ENCODE measurements at regions of chr1 and their contacts with region 1.

Region 1: DNA sequence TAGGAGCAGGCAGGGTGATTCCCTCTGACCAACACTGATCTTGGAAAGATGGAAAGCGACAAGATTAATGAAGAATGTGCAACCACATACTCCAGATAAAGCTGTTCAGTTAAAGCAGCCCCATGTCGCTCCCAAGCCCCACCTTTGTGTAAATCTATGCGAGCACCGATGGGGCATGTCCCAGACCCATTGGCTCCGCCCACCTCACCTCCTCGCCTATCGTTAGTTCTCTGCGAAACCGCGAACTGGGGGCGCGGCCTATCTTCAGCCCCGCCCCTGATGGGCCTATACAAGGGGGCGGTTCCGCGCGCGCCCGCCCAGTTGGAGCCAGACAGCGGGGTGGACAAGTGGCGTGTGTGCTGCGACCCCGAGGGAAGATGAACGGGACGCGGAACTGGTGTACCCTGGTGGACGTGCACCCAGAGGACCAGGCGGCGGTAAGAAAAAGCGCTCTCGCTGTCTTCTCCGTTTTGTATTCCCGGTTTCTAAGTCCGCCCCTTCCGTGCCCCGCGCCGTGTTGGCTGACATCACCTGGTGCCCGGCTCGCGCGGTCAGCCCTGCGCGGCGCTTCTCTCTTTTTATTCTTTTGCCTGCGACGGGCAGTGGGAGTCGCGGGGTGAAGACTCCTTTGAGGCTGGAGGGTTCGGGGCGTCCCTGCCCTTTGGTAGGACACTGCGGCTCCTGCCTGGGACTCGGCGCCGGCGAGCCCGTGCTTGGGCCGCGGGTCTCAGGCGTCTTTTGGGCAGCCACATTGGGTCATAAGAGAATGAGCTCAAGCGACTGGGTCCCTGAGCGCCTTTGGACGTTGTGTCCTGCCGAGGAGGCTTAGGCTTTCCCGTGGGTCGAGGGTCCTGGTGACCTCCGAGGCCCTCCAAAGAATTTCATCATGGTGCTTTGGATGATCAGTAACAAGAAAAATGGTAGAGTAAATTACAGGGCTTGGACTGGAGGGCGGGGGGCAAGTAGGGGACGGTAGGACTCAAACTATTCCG is at the start of gene TUFT1:
- DNase-seq: peak; percentile 86 to 97 (median 94)
- ATAC-seq: peak; percentile 99
- H3K4me3 ChIP-seq: peak within 1 kb of the TSS; percentile 74 to 78
- H3K4me3 Mint-ChIP-seq: peak within 1 kb of the TSS; percentile 95
- H3K27ac ChIP-seq: peak within 1 kb of the TSS in 1 of 2 experiments; percentile 29
- H3K27ac Mint-ChIP-seq: peak within 1 kb of the TSS; percentile 82
- H3K4me1 ChIP-seq: peaks cover 14% of the 10 kb centered on the region
- H3K4me1 Mint-ChIP-seq: peaks cover 21% of the 10 kb centered on the region
- H3K27me3 ChIP-seq: peaks cover 4 to 16% of the 10 kb centered on the region in 2 experiments
- H3K27me3 Mint-ChIP-seq: no peaks in the 10 kb centered on the region
- CTCF ChIP-seq: no peak
- total RNA-seq, gene TUFT1: 8.5 TPM

Region 2: DNA sequence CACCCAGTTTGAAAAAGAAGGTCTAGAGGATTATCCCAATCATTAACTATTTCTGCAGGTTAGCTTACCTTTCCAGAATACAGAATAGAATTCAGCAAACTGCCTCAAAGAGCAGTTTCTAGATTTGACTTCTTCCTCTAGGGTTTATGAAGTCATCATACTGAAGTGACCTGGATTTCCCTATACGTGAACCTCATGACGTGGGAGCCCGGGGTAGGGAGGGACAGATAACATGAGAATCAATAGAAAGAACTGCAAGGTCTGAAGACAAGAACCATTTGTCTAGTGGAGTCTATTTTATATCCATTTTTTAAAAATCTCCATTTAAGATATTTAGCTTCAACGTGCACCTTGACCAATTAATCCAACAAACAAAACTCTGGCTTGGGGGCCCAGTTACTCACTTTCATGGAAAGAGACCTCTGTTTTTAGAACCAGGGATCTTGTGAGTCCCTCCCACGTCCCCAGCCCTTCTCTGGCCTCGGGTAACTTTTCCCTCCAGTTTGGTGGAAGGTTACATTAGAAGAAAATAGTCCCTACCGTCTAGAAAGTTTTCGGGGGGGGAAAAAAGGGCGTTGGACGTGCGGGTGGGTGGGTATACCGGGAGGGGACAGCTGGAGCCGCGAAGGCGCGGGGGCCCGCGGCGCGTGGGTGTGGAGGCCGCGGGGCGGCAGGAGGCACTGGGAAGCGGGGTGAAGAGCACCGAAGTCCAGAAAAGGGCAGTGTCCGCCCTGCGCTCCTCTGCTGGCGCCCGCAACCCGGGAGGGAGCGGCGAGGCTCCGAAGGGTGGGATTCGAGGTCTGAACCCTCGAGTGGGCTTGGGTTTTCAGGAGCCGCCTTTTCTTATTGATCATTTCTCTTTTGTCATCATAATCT is 67.2 kb before region 1 on chr1:
- CTCF ChIA-PET with region 1: no interaction called
- POLR2A ChIA-PET with region 1: no interaction called
- intact Hi-C with region 1: loop called in 1 of 2 experiments (anchors 2 kb)
- DNase-seq: peak in 4 of 9 experiments; percentile 11 to 66 (median 46)
- ATAC-seq: peak; percentile 40
- H3K4me3 ChIP-seq: peak overlapping the region; percentile 50 to 66
- H3K4me3 Mint-ChIP-seq: peak overlapping the region; percentile 80
- H3K27ac ChIP-seq: no peak overlapping the region
- H3K27ac Mint-ChIP-seq: peak overlapping the region; percentile 18
- H3K4me1 ChIP-seq: peaks cover 4% of the 10 kb centered on the region
- H3K4me1 Mint-ChIP-seq: peaks cover 7% of the 10 kb centered on the region
- H3K27me3 ChIP-seq: no peaks in the 10 kb centered on the region
- H3K27me3 Mint-ChIP-seq: peaks cover 5% of the 10 kb centered on the region
- CTCF ChIP-seq: no peak

Region 3: GRCh38 chr1:151510957-151511635 is 29.2 kb before region 1 on chr1 and contains the start of gene CGN:
- CTCF ChIA-PET with region 1: no interaction called
- POLR2A ChIA-PET with region 1: interaction called, 12 read pairs
- intact Hi-C with region 1: loop called (anchors 1 kb)
- DNase-seq: peak; percentile 62 to 94 (median 86)
- ATAC-seq: peak; percentile 97
- H3K4me3 ChIP-seq: peak within 1 kb of the TSS; percentile 65 to 79
- H3K4me3 Mint-ChIP-seq: peak within 1 kb of the TSS; percentile 94
- H3K27ac ChIP-seq: peak within 1 kb of the TSS; percentile 42 to 48
- H3K27ac Mint-ChIP-seq: peak within 1 kb of the TSS; percentile 80
- H3K4me1 ChIP-seq: peaks cover 21% of the 10 kb centered on the region
- H3K4me1 Mint-ChIP-seq: peaks cover 28% of the 10 kb centered on the region
- H3K27me3 ChIP-seq: no peaks in the 10 kb centered on the region
- H3K27me3 Mint-ChIP-seq: no peaks in the 10 kb centered on the region
- CTCF ChIP-seq: no peak
- total RNA-seq, gene CGN: 0.28 to 0.49 TPM